ENCODE measurements at regions of chr1 and their contacts with region 1.

Region 1: DNA sequence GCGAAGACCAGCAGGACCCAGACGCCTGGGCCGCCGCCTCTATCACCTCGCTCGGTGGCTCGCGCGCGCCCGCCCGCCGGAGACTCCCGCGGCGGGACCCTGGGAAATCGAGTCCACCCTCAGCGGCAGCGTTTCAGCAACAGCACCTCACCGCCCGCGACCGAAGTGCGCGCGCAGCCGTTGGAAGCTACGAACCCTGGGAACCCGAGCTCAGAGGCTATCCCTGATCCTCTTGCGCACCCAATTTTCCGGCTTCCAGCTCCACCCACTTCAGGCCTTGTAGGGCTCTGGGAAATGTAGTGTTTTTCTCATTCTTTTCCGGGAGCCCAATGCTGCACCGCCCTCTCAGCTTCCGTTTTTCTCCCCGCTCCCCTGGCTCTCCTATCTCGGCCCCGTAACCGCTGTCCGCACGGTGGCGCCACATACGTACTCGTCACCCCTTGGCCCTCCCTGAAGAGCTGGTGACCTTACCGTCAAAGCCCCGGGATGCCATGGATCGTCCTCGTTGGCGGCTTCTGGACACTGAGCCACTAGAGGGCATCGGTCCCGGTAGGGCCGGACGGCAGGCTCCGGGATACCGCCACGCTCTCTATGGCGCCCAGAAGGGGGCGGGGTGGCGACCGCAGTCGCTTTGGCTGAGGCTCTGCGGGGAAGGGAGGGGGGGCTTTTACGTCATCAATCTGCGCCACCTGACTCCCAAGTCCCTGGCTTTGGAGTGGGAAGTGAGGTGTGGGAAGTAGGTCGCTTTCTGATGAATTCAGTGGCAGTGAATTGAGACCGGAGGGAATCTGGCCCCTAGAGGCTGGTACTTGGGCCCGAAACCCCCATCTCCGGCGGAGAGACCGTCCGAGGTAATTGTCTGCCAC is at the starts of genes ODR4 and TPR:
- DNase-seq: peak; percentile 98
- H3K4me3 Mint-ChIP-seq: peak within 1 kb of the TSS; percentile 98
- H3K27ac Mint-ChIP-seq: peak within 1 kb of the TSS; percentile 95
- H3K4me1 Mint-ChIP-seq: peaks cover 38% of the 10 kb centered on the region
- H3K27me3 Mint-ChIP-seq: no peaks in the 10 kb centered on the region
- total RNA-seq, gene ODR4: 13.0 to 15.5 TPM
- total RNA-seq, gene TPR: 217 to 226 TPM

Region 2: DNA sequence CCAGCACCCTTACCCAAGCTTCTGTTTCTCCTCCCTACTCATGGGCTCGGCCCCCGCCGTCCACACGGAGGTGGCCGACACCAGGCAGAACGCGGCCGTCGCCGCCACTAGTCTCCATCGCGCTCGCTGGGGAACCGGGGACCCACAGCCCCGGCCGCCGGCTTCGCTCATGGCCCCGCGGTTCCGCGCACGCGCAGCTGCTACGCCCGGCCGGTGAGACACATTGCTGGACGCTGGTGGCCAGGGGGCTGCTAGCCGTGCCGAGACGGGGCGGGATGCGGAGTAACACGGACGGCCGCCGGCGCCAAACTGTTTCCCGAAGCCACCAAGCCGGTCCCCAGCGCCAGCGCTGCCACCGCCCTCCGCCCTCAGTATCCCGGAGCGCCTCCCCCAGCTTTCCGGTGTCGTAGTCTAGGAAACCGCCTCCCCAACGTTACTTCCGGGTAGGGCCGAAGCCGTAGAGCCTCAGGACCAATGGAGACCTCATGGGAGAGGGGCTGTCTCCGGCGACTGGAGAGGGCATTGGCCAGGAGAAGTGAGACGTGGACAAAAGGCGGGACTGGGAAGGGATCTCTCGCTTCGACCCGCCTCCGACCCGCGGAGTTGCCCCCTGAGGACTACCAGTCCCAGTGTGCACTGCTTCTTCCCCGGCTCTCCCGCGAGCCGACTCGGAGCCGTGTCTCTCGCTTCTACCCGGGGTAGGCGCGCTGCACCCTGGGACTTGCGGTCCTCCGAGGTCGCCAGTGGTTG is 1620.7 kb before region 1 on chr1 and contains the start of gene EDEM3:
- CTCF ChIA-PET with region 1: no interaction called
- intact Hi-C with region 1: loop called (anchors 1 kb)
- DNase-seq: peak; percentile 98
- H3K4me3 Mint-ChIP-seq: peak within 1 kb of the TSS; percentile 88
- H3K27ac Mint-ChIP-seq: peak within 1 kb of the TSS; percentile 88
- H3K4me1 Mint-ChIP-seq: peaks cover 36% of the 10 kb centered on the region
- H3K27me3 Mint-ChIP-seq: no peaks in the 10 kb centered on the region
- total RNA-seq, gene EDEM3: 9.9 to 10.5 TPM

Region 3: GRCh38 chr1:186272486-186272885 is 102.8 kb before region 1 on chr1:
- CTCF ChIA-PET with region 1: interaction called, 7 read pairs
- intact Hi-C with region 1: loop called (anchors 1 kb)
- DNase-seq: no peak
- H3K4me3 Mint-ChIP-seq: no peak overlapping the region
- H3K27ac Mint-ChIP-seq: peak overlapping the region; percentile 65
- H3K4me1 Mint-ChIP-seq: peaks cover 40% of the 10 kb centered on the region
- H3K27me3 Mint-ChIP-seq: no peaks in the 10 kb centered on the region

Region 4: GRCh38 chr1:186330758-186331157 is 44.6 kb before region 1 on chr1:
- CTCF ChIA-PET with region 1: interaction called, 13 read pairs
- intact Hi-C with region 1: loop called (anchors 5 kb)
- DNase-seq: no peak
- H3K4me3 Mint-ChIP-seq: no peak overlapping the region
- H3K27ac Mint-ChIP-seq: no peak overlapping the region
- H3K4me1 Mint-ChIP-seq: peaks cover 7% of the 10 kb centered on the region
- H3K27me3 Mint-ChIP-seq: no peaks in the 10 kb centered on the region

Region 5: GRCh38 chr1:186386725-186387383 is 11.5 kb after region 1 on chr1:
- CTCF ChIA-PET with region 1: interaction called, 10 read pairs
- intact Hi-C with region 1: no loop called
- DNase-seq: no peak
- H3K4me3 Mint-ChIP-seq: no peak overlapping the region
- H3K27ac Mint-ChIP-seq: no peak overlapping the region
- H3K4me1 Mint-ChIP-seq: peaks cover 2% of the 10 kb centered on the region
- H3K27me3 Mint-ChIP-seq: no peaks in the 10 kb centered on the region

Region 6: DNA sequence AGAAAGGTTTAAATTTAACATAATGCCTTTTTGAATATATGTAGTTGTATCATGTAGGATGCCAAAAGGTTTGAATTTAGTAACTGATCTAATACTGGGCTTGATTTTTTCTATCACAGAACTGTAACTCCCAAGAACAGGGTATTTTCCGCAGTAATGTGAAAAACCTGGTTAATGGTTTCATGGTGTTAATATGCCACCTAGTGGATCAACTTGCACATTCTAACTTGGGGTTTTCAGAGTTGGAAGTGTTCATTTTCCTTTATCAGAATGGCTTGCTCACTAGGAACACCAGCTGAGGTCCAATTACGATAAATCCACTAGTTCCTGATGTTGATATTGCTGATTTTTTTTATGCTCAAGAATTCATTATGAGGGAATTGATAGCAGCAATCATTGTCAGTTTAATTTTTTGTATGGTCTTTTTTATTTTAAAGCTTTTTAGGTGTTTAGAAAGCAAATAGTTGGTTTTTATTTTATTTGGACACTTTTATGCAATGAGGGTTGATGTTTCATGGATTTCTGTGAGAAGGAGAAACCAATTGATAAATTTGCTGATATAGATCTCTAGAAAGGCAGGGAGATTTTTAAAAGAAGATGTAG is 610.7 kb after region 1 on chr1:
- CTCF ChIA-PET with region 1: no interaction called
- intact Hi-C with region 1: loop called (anchors 10 kb)
- DNase-seq: no peak
- H3K4me3 Mint-ChIP-seq: no peak overlapping the region
- H3K27ac Mint-ChIP-seq: no peak overlapping the region
- H3K4me1 Mint-ChIP-seq: no peaks in the 10 kb centered on the region
- H3K27me3 Mint-ChIP-seq: peaks cover 8% of the 10 kb centered on the region